T-cell (primary cell): ENCODE measurements at regions of chr6 and their contacts with region 1.

Region 1: DNA sequence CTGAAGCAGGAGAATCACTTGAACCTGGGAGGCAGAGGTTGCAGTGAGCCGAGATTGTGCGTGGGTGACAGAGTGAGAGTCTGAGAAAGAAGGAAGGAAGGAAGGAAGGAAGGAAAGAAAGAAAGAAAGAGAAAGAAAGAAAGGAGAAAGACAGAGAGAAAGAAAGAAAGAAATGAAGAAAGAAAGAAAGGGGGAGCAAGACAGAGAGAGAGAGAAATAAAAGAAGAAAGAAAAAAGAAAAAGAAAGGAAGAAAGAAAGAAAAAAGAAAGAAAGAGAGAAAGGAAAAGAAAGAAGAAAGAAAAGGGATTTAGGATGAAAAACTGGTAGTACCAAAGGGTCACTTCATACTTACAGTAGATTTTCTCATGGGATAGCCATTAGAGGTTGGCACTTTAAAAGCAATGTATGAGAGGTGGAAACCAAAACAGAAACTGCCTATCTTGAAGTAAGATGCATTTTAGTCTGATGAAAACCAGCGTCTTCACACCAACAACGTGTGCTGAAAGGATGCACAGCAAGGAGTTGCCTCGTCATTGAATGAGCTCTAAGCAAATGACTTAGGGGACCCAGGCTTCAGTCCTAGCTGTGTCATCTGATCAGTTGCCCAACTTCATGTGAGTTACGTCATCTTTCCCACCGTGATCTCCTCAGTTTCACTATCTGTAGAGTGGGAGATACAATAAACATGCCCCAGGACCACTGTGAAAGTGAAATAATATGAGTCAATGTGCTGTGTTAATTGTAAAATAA is 133.9 kb upstream of the NEDD9 start:
- DNase-seq: peak in 29 of 35 experiments; percentile 8 to 74 (median 34)
- ATAC-seq: peak; percentile 40 to 86 (median 49)
- H3K4me3 ChIP-seq: no peak overlapping the region
- H3K4me3 Mint-ChIP-seq: peak overlapping the region; percentile 36 to 49 (median 47)
- H3K27ac ChIP-seq: peak overlapping the region; percentile 52
- H3K27ac Mint-ChIP-seq: peak overlapping the region; percentile 55 to 80
- H3K4me1 ChIP-seq: peaks cover 4 to 26% of the 10 kb centered on the region in 2 experiments
- H3K4me1 Mint-ChIP-seq: peaks cover 75 to 88% (median 87%) of the 10 kb centered on the region in 3 donors
- H3K27me3 ChIP-seq: no peaks in the 10 kb centered on the region
- H3K27me3 Mint-ChIP-seq: no peaks in the 10 kb centered on the region

Region 2: GRCh38 chr6:11381801-11382513 is 15.6 kb after region 1 on chr6:
- CTCF ChIA-PET with region 1: interaction called, 4 to 9 read pairs
- POLR2A ChIA-PET with region 1: interaction called, 3 to 29 read pairs
- DNase-seq: peak; percentile 47 to 87 (median 68)
- ATAC-seq: peak; percentile 95 to 97 (median 96)
- H3K4me3 ChIP-seq: peak overlapping the region; percentile 80
- H3K4me3 Mint-ChIP-seq: peak overlapping the region; percentile 89 to 94 (median 90)
- H3K27ac ChIP-seq: peak overlapping the region; percentile 94
- H3K27ac Mint-ChIP-seq: peak overlapping the region; percentile 92 to 93
- H3K4me1 ChIP-seq: peaks cover 20 to 46% of the 10 kb centered on the region in 2 experiments
- H3K4me1 Mint-ChIP-seq: peaks cover 61 to 79% (median 62%) of the 10 kb centered on the region in 3 donors
- H3K27me3 ChIP-seq: no peaks in the 10 kb centered on the region
- H3K27me3 Mint-ChIP-seq: no peaks in the 10 kb centered on the region